Dorsolateral prefrontal cortex (tissue), 120 donors: ENCODE measurements at regions of chr9 and their contacts with region 1.

Region 1: DNA sequence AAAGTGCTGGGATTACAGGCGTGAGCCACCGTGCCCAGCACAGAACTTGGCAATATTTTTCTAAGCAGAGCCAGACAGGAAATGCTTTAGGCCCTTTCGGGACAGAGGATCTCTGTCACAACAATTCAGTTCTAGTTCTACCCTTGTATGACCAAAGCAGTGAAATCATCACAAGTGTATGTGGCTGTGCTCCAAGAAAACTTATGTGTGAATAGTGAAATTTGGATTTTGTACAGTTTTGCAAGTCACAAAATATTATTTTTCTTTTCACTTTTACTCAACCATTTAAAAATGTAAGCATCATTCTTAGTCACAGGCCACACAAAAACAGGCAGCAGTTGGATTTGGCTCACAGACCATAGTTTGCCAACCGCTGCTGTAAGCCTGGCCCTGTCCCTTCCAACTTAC is 20.4 kb upstream of the PRUNE2 start:
- DNase-seq: no peak
- H3K4me3 ChIP-seq: no peak overlapping the region
- H3K27ac ChIP-seq: no peak overlapping the region
- H3K27me3 ChIP-seq: peaks cover 0 to 5% (median 0%) of the 10 kb centered on the region in 45 donors
- CTCF ChIP-seq: no peak

Region 2: DNA sequence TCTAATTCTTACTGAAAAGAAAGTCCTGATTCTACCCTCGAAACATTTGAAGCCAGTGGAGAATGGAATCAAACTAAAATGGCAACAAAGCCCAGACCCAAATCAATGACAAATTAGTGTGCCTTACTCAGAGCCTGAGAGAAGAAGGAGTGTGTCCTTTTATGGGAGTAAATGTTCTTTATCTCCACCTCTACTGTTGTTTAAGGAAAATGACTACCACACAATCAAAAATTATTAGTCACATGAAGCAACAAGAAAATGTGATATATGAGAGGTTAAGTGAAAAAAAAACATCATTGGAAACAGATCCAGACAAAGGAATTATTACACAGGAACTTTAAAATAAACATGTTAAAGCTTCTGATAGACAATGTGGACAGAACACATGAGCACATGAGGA is 43.4 kb after region 1 on chr9:
- intact Hi-C with region 1: loop called in 1 of 2 experiments (anchors 10 kb)
- DNase-seq: no peak
- H3K4me3 ChIP-seq: no peak overlapping the region
- H3K27ac ChIP-seq: no peak overlapping the region
- H3K27me3 ChIP-seq: no peaks in the 10 kb centered on the region
- CTCF ChIP-seq: no peak

Region 3: DNA sequence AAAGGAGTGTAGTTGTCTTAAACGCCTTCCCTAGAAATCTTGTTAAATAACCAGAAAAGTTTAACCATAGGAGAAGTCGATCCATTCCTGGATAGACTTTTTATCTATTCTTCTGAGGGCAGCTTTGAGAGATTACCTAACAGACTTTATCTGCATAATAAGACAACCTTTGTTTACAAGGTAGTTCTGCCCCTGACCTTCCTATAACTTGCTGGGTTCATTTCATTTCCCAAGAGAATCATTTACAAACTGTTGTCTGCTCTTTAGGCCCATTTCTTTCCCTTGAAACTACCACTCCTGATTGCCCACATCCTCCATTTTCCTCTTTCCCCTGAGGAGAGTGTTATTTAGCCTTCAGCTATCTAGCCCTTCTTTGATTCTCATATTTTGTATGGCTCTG is 185.1 kb after region 1 on chr9:
- intact Hi-C with region 1: no loop called
- DNase-seq: no peak
- H3K4me3 ChIP-seq: no peak overlapping the region
- H3K27ac ChIP-seq: no peak overlapping the region
- H3K27me3 ChIP-seq: peaks cover 0 to 4% (median 0%) of the 10 kb centered on the region in 45 donors
- CTCF ChIP-seq: no peak